Lower lobe of right lung (tissue), 2 donors: ENCODE measurements at regions of chr1 and their contacts with region 1.

Region 1: GRCh38 chr1:45569962-45570581 is 13.8 kb upstream of the NASP start:
- DNase-seq: peak; percentile 61
- ATAC-seq: peak; percentile 90 to 95
- H3K4me3 ChIP-seq: no peak overlapping the region
- H3K27ac ChIP-seq: peak overlapping the region; percentile 21
- H3K4me1 ChIP-seq: peaks cover 12% of the 10 kb centered on the region
- H3K27me3 ChIP-seq: no peaks in the 10 kb centered on the region
- CTCF ChIP-seq: peak; percentile 99

Region 2: DNA sequence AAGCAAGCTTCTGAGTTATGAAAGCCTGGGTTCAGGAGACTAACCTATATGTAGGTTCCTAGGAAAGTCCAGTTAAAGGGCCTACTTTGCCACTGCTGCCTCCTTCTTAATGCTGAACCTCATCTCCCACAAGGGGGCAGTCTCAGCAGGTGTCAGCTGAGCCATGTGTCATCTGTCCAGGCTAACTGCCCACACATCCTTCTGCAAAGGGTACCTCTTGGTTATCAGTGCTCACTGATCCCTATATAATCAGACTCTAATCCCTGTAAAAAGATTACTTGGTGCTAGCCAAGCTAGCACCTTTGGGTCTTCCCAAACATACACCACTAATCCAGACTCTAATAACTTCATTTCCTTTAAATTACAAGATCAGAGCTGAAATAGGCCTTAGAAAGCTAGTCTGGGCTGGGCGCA is 57.4 kb before region 1 on chr1:
- intact Hi-C with region 1: loop called (anchors 5 kb)
- DNase-seq: no peak
- ATAC-seq: peak; percentile 75 to 76
- H3K4me3 ChIP-seq: no peak overlapping the region
- H3K27ac ChIP-seq: no peak overlapping the region
- H3K4me1 ChIP-seq: peaks cover 27% of the 10 kb centered on the region
- H3K27me3 ChIP-seq: no peaks in the 10 kb centered on the region
- CTCF ChIP-seq: peak; percentile 75